Mammary epithelial cell (primary cell): ENCODE measurements at regions of chr12 and their contacts with region 1.

Region 1: GRCh38 chr12:120381752-120382419 is 12.9 kb upstream of the MSI1 start:
- DNase-seq: no peak
- H3K4me3 ChIP-seq: no peak overlapping the region
- H3K27ac ChIP-seq: no peak overlapping the region
- H3K4me1 ChIP-seq: no peaks in the 10 kb centered on the region
- H3K27me3 ChIP-seq: no peaks in the 10 kb centered on the region
- CTCF ChIP-seq: no peak

Region 2: DNA sequence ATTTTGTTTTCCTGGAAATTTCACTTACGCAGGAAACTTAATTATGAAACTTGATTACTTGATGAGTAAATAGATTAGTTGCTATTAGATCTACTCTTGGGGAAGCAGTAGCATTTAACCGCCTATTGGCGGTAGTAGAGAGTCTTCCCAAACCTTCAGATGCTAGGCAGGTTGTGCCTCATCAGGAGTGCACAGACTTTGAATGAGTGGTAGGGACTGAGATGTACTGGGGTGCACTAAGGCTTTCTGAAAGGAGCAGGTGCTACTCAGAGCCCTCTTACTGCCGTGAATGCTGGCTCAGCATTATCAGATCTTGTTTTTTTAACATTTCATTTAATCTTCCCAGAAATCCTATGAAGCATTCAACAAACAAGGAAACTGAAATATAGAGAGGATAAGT is 72.1 kb after region 1 on chr12:
- CTCF ChIA-PET with region 1: no interaction called
- dilution Hi-C with region 1: loop called (anchors 5 kb)
- in situ Hi-C with region 1: no loop called
- intact Hi-C with region 1: no loop called
- DNase-seq: peak; percentile 18
- H3K4me3 ChIP-seq: no peak overlapping the region
- H3K27ac ChIP-seq: no peak overlapping the region
- H3K4me1 ChIP-seq: no peaks in the 10 kb centered on the region
- H3K27me3 ChIP-seq: no peaks in the 10 kb centered on the region
- CTCF ChIP-seq: peak; percentile 71 to 82